ENCODE measurements at regions of chr9 and their contacts with region 1.

Region 1: DNA sequence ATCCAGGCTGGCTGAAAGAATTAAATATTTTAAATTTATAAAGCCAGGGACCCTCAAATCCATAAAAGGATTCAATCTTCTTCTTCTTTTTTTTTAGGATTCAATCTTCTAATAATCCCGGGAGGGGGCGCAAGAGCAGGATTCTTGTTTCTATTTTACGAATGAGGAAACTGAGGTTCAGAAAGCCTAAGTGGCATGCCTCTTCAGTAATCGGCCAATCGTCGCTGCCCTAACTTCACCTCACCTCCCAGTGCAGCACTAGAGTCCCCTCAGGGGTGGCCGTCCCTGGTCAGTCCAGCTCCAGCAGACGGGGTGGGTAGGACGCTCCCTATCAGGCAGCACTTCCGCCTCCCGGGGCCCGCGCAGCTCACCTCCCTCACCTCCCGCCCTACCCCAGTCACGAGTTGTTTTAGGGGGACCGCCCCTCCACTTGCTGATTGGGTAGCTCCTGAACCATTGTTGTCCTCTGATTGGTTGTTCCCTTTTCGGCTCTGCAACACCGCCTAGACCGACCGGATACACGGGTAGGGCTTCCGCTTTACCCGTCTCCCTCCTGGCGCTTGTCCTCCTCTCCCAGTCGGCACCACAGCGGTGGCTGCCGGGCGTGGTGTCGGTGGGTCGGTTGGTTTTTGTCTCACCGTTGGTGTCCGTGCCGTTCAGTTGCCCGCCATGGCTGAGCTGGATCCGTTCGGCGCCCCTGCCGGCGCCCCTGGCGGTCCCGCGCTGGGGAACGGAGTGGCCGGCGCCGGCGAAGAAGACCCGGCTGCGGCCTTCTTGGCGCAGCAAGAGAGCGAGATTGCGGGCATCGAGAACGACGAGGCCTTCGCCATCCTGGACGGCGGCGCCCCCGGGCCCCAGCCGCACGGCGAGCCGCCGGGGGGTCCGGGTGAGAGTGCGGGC is at the start of gene CLTA:
- DNase-seq: peak; percentile 96
- H3K4me3 Mint-ChIP-seq: peak within 1 kb of the TSS; percentile 98
- H3K27ac Mint-ChIP-seq: peak within 1 kb of the TSS; percentile 74
- H3K4me1 Mint-ChIP-seq: peaks cover 47% of the 10 kb centered on the region
- H3K27me3 Mint-ChIP-seq: peaks cover 8% of the 10 kb centered on the region
- total RNA-seq, gene CLTA: 160 and 161 TPM in 2 replicates

Region 2: DNA sequence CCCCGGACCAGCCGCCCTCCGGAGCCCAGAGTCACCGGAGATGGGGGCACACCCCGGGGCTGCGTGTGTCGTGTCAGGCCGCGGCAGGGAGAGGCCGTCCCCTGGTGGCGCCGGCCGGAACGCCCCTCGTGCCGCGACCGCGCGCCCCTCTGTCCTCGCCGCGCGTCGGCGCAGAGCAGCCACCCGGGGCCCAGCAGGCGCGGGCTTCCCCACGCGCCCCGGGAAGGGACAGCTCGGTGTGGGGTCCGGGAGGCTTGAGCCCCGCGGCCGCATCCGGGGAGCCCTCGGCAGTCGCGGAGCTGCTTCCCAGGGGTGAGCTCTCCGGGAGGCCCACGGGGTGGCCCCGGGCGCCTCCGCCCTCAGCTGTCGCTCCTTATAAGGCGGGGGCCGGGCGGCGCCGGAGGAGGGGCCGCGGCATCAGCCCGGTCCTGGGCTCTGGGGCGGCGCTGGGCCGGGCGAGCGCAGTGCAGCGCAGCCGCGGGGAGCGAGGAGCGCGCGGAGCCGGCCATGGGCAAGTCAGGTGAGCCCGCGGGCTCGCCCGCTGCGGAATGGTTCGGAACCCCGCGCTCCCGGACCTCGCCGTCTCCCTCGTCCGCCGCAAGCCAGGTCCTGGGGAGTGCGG is 54.3 kb before region 1 on chr9 and contains the start of gene GLIPR2:
- intact Hi-C with region 1: loop called (anchors 2 kb)
- DNase-seq: peak; percentile 77
- H3K4me3 Mint-ChIP-seq: peak within 1 kb of the TSS; percentile 96
- H3K27ac Mint-ChIP-seq: peak within 1 kb of the TSS; percentile 72
- H3K4me1 Mint-ChIP-seq: peaks cover 43% of the 10 kb centered on the region
- H3K27me3 Mint-ChIP-seq: peaks cover 12% of the 10 kb centered on the region
- total RNA-seq, gene GLIPR2: 28.8 and 30.1 TPM in 2 replicates

Region 3: DNA sequence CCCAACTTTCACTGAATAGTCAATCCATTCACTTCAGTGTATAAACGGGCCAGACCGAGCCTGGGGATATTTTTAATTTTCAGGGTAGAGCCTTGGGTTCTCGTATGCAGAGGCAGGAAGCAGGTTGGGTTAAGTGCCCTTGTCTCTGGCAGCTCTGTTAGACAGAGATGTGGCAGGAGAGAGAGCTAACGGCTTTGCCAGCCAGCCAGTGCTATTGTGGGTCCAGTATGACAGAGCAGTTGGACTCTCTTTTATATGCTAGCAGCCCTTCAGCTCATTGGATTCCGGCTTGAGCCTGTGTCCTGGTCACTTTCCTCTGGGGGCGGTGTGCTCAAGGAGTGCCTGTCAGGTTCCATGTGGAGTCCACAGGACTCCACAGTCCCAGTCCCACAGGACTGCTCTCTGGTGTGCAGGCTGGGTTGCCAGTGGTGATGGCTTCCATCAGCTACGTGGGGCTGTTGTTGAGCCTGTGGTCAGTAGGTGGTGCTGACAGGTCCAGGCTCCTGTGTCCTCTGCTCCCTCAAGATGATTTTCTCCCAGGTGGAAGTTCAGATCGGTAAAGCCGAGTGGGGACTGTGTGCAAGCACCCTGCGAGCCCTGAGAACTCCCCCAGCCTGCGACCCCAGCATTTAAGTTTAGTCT is 14.4 kb after region 1 on chr9:
- intact Hi-C with region 1: loop called (anchors 2 kb)
- DNase-seq: no peak
- H3K4me3 Mint-ChIP-seq: no peak overlapping the region
- H3K27ac Mint-ChIP-seq: no peak overlapping the region
- H3K4me1 Mint-ChIP-seq: peaks cover 41% of the 10 kb centered on the region
- H3K27me3 Mint-ChIP-seq: no peaks in the 10 kb centered on the region

Region 4: DNA sequence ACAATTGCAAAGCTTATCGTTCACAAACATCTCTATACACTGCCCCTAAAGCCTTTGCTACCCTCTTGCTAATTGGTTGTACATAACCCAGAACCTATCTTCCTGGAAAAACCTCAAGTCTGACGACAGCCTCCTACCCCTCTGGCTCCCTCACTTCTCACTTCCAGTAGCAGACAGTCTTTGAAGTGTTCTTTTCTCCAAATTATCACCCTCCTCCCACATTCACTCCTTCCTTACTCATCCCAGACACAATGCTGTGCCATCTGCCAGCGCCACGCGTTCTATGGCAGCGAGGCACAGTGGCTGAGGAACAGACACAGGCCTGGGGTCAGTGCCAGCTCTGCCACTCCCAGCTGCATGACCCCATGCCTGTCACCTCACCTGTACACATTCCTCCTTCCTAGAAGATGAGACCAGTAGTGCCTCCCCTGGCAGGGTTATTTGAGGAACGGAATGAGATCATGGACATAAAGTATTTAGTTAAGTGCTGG is 27.8 kb after region 1 on chr9:
- intact Hi-C with region 1: loop called (anchors 2 kb)
- DNase-seq: peak; percentile 20
- H3K4me3 Mint-ChIP-seq: peak overlapping the region; percentile 41
- H3K27ac Mint-ChIP-seq: peak overlapping the region; percentile 87
- H3K4me1 Mint-ChIP-seq: peaks cover 34% of the 10 kb centered on the region
- H3K27me3 Mint-ChIP-seq: no peaks in the 10 kb centered on the region

Region 5: GRCh38 chr9:36258208-36258988 is 67.8 kb after region 1 on chr9 and contains the start of gene GNE:
- intact Hi-C with region 1: loop called (anchors 1 kb)
- DNase-seq: peak; percentile 97
- H3K4me3 Mint-ChIP-seq: peak within 1 kb of the TSS; percentile 86
- H3K27ac Mint-ChIP-seq: peak within 1 kb of the TSS; percentile 84
- H3K4me1 Mint-ChIP-seq: peaks cover 7% of the 10 kb centered on the region
- H3K27me3 Mint-ChIP-seq: no peaks in the 10 kb centered on the region
- total RNA-seq, gene GNE: 27.7 and 28.5 TPM in 2 replicates

Region 6: GRCh38 chr9:36328798-36329411 is 138.3 kb after region 1 on chr9:
- intact Hi-C with region 1: loop called (anchors 2 kb)
- DNase-seq: peak; percentile 23
- H3K4me3 Mint-ChIP-seq: no peak overlapping the region
- H3K27ac Mint-ChIP-seq: no peak overlapping the region
- H3K4me1 Mint-ChIP-seq: peaks cover 4% of the 10 kb centered on the region
- H3K27me3 Mint-ChIP-seq: no peaks in the 10 kb centered on the region

Region 7: DNA sequence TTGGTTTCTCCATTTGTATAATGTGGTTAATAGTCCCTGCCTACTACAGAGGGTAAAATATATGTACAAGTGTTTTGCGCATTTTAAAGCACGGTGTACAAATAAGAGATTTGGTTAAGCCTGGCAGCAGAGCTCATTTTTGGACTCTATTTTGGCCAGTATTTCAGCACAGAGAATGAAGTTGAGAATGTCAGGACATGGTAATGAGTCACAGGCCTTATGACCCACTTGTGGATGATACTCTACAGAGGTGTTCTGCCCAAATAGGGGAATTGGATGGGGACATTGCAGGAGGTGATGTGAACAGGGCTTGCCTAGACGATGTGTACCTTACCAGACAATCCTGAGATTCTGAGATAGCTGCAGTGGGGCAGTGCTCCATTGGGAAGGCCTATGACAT is 432.6 kb after region 1 on chr9:
- intact Hi-C with region 1: no loop called
- DNase-seq: no peak
- H3K4me3 Mint-ChIP-seq: no peak overlapping the region
- H3K27ac Mint-ChIP-seq: no peak overlapping the region
- H3K4me1 Mint-ChIP-seq: peaks cover 6% of the 10 kb centered on the region
- H3K27me3 Mint-ChIP-seq: no peaks in the 10 kb centered on the region

Measured in activated T-helper 2 cell treated with anti-CD3 and anti-CD28 coated beads, Interferon-gamma antibody, Interleukin-2, Interleukin-4, amounts not matched to agents 10 μg/mL and 5 μg/mL and 100 μg/mL, durations not matched to agents 14 hours and 24 hours and 36 hours (primary cell).